Ascending aorta (tissue), 2 donors: ENCODE measurements at regions of chrX and their contacts with region 1.

Region 1: GRCh38 chrX:43557792-43558191 is 98.3 kb upstream of the MAOA start:
- DNase-seq: peak in 1 of 2 donors; percentile 79
- H3K4me3 ChIP-seq: no peak overlapping the region
- H3K27ac ChIP-seq: no peak overlapping the region
- H3K4me1 ChIP-seq: no peaks in the 10 kb centered on the region
- H3K27me3 ChIP-seq: no peaks in the 10 kb centered on the region
- CTCF ChIP-seq: peak; percentile 25 to 66 (median 45)

Region 2: DNA sequence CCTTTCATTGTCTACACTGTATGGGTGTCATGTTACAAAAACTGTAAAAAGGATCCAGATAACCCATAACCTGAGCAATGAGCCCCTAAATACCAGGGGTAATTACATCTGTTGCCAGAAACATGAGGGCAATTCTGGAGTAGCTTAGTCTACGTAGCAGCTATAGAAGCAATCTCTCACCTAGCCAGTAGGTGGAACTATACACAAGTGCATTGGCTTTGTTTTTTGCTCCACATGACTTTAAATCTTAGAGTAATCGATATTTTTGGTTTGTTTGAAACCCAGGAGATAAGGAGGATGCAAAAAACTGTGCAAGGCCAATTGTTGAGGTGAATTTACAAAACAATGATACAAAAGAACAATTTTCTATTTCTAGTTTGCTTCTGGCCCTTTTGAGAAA is 1776.3 kb before region 1 on chrX:
- intact Hi-C with region 1: loop called (anchors 5 kb)
- DNase-seq: no peak
- H3K4me3 ChIP-seq: no peak overlapping the region
- H3K27ac ChIP-seq: no peak overlapping the region
- H3K4me1 ChIP-seq: peaks cover 0 to 4% of the 10 kb centered on the region in 2 donors
- H3K27me3 ChIP-seq: no peaks in the 10 kb centered on the region
- CTCF ChIP-seq: peak; percentile 32 to 74 (median 49)

Region 3: DNA sequence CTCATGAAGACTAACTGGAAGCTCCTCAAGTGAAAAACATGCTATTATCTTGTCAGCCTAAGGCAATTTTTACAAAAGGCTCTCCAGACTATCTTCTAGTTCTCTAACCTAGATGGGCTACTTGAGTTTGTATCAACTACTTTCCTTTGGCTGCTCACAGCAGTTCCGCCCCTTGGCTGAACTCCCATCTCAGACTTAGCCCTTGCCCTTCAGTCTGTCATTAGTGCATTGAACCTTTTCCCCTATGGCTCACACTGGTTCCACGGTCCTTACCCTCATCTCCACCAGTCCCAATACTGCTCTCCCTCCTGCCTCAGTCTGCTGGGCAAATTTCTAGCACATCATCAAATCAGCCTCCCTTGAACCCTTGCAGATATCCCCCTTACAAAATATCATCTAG is 1142.2 kb before region 1 on chrX:
- intact Hi-C with region 1: no loop called
- DNase-seq: no peak
- H3K4me3 ChIP-seq: no peak overlapping the region
- H3K27ac ChIP-seq: no peak overlapping the region
- H3K4me1 ChIP-seq: no peaks in the 10 kb centered on the region
- H3K27me3 ChIP-seq: no peaks in the 10 kb centered on the region
- CTCF ChIP-seq: no peak

Region 4: GRCh38 chrX:43604753-43605152 is 47.0 kb after region 1 on chrX:
- intact Hi-C with region 1: no loop called
- DNase-seq: no peak
- H3K4me3 ChIP-seq: no peak overlapping the region
- H3K27ac ChIP-seq: no peak overlapping the region
- H3K4me1 ChIP-seq: no peaks in the 10 kb centered on the region
- H3K27me3 ChIP-seq: no peaks in the 10 kb centered on the region
- CTCF ChIP-seq: no peak

Region 5: DNA sequence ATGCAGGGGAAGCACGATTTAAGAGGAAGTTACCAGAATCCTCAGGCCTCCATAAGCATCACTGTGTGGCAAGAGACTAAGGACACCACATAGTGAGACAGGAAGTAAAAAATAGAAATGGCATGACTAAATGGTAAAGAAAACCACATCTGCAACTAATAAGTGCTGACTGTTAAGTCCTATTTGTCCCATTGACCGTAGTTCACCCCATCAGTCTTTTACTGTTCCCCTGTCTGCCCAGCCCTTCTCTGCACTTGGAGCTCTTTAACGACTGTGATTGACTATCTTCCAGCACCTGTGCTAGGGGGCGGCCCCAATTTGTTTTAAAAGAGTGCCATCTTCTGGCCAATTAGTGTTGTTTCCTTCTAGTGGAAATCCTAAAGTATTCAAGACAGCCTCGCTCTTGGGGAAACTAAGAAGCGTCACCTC is 192.5 kb after region 1 on chrX:
- intact Hi-C with region 1: loop called (anchors 1 kb)
- DNase-seq: peak in 1 of 2 donors; percentile 72
- H3K4me3 ChIP-seq: no peak overlapping the region
- H3K27ac ChIP-seq: no peak overlapping the region
- H3K4me1 ChIP-seq: no peaks in the 10 kb centered on the region
- H3K27me3 ChIP-seq: no peaks in the 10 kb centered on the region
- CTCF ChIP-seq: peak; percentile 44 to 60 (median 51)